Activated T-helper 1 cell treated with anti-CD3 and anti-CD28 coated beads, Interleukin-12 subunit alpha, Interleukin-12 subunit beta, Interleukin-2, Interleukin-4 antibody, amounts not matched to agents 30 ng/mL and 10 ng/mL and 1 ng/mL, durations not matched to agents 14 hours and 24 hours and 36 hours (primary cell): ENCODE measurements at regions of chr9 and their contacts with region 1.

Region 1: DNA sequence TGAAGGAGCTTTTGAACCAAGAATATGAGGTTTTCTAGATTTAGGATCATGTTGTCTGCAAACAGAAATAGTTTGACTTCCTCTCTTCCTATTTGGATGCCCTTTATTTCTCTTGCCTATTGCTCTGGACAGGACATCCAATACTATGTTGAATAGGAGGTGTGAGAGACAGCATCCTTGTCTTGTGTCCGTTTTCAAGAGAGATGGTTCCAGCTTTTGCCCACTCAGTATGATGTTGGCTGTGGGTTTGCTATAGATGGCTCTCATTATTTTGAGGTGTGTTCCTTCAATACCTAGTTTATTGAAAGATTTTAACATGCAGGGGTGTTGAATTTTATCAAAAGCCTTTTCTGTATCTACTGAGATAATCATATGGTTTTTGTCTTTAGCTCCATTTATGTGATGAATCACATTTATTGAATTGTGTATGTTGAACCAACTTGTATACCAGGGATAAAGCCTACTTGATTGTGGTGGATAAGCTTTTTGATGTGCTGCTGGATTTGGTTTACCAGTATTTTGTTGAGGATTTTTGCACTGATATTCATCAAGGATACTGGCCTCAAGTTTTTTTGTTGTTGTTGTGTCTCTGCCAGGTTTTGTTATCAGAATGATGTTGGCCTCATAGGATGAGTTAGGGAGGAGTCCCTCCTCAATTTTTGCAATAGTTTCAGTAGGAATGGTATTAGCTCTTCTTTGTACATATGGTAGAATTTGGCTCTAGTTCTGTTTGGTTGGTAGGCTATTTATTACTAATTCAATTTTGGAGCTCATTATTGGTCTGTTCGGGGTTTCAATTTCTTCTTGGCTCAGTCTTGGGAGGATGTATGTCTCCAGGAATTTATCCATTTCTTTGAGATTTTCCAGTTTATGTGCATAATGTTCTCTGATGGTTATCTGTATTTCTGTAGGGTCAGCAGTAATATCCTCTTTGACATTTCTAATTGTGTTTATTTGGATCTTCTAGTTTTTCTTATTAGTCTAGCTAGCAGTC is 41.2 kb upstream of the IFNE start:
- DNase-seq: no peak
- H3K4me3 Mint-ChIP-seq: no peak overlapping the region
- H3K27ac Mint-ChIP-seq: no peak overlapping the region
- H3K4me1 Mint-ChIP-seq: no peaks in the 10 kb centered on the region
- H3K27me3 Mint-ChIP-seq: peaks cover 5% of the 10 kb centered on the region

Region 2: DNA sequence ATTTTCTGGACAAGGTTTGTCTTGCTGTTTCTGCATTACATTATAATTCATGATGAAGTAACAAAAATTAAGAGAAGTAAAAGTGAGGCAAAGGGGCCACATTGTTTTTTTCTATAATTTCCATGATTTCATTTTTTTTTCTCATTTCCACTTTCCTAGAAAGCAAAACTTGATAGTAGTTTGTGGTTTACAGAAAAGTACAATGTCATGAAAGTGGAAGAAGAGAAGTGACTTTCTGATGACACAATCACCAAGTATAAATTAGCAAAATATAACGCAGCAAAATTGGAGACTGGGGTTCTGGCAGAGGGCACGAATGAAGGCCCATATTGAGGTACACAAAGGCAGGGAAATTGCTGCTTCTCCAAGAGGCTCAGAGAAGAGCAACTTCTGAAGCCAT is 278.5 kb before region 1 on chr9:
- intact Hi-C with region 1: no loop called
- DNase-seq: no peak
- H3K4me3 Mint-ChIP-seq: no peak overlapping the region
- H3K27ac Mint-ChIP-seq: no peak overlapping the region
- H3K4me1 Mint-ChIP-seq: no peaks in the 10 kb centered on the region
- H3K27me3 Mint-ChIP-seq: peaks cover 24% of the 10 kb centered on the region

Region 3: GRCh38 chr9:21502586-21502985 is 20.7 kb before region 1 on chr9:
- intact Hi-C with region 1: loop called (anchors 2 kb)
- DNase-seq: no peak
- H3K4me3 Mint-ChIP-seq: no peak overlapping the region
- H3K27ac Mint-ChIP-seq: no peak overlapping the region
- H3K4me1 Mint-ChIP-seq: no peaks in the 10 kb centered on the region
- H3K27me3 Mint-ChIP-seq: peaks cover 2% of the 10 kb centered on the region